ENCODE measurements at regions of chr14 and their contacts with region 1.

Region 1: GRCh38 chr14:98725191-98725590 is 546.8 kb downstream of the BCL11B start:
- DNase-seq: peak; percentile 46
- H3K4me3 ChIP-seq: peak overlapping the region; percentile 18
- H3K27ac ChIP-seq: peak overlapping the region; percentile 44
- H3K4me1 ChIP-seq: peaks cover 56% of the 10 kb centered on the region
- CTCF ChIP-seq: no peak

Region 2: DNA sequence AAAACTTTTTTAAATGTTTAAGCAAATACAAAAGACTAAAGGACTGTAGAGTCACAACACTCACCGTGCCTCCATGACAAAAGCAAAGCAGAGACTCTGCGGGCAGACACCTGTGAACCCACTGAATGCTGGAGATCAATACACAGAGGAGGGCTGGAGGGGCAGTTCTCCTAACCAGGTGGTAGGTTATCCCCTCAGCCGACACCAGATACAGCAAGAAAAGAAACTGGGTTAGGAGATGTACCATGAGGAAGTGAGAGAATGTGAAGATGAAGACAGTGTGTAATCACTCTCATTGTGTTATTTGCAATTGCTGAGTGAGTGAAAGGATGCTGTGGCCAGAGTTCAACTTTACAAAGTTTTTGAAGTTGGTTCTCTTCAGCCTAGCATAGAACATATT is 66.5 kb after region 1 on chr14:
- CTCF ChIA-PET with region 1: no interaction called
- POLR2A ChIA-PET with region 1: interaction called, 4 read pairs
- intact Hi-C with region 1: loop called (anchors 2 kb)
- DNase-seq: peak; percentile 86
- H3K4me3 ChIP-seq: peak overlapping the region; percentile 56
- H3K27ac ChIP-seq: peak overlapping the region; percentile 97
- H3K4me1 ChIP-seq: peaks cover 44% of the 10 kb centered on the region
- CTCF ChIP-seq: no peak

Region 3: GRCh38 chr14:99003408-99004037 is 278.3 kb after region 1 on chr14:
- CTCF ChIA-PET with region 1: no interaction called
- POLR2A ChIA-PET with region 1: interaction called, 11 read pairs
- intact Hi-C with region 1: no loop called
- DNase-seq: no peak
- H3K4me3 ChIP-seq: no peak overlapping the region
- H3K27ac ChIP-seq: no peak overlapping the region
- H3K4me1 ChIP-seq: no peaks in the 10 kb centered on the region
- CTCF ChIP-seq: no peak

Measured in OCI-LY7 (cell line).